ENCODE measurements at regions of chr17 and their contacts with region 1.

Region 1: GRCh38 chr17:45218895-45219661 is 2.6 kb upstream of the FMNL1 start:
- DNase-seq: peak in 34 of 35 experiments; percentile 55 to 92 (median 81)
- ATAC-seq: peak in 3 of 4 experiments; percentile 15 to 32 (median 32)
- H3K4me3 ChIP-seq: no peak overlapping the region
- H3K4me3 Mint-ChIP-seq: peak overlapping the region; percentile 84 to 88 (median 85)
- H3K27ac ChIP-seq: peak overlapping the region; percentile 18
- H3K27ac Mint-ChIP-seq: peak overlapping the region; percentile 76 to 83
- H3K4me1 ChIP-seq: peaks cover 17 to 42% of the 10 kb centered on the region in 2 experiments
- H3K4me1 Mint-ChIP-seq: peaks cover 36 to 48% (median 44%) of the 10 kb centered on the region in 3 donors
- H3K27me3 ChIP-seq: no peaks in the 10 kb centered on the region
- H3K27me3 Mint-ChIP-seq: no peaks in the 10 kb centered on the region

Region 2: GRCh38 chr17:44804302-44805089 is 414.6 kb before region 1 on chr17:
- CTCF ChIA-PET with region 1: no interaction called
- POLR2A ChIA-PET with region 1: no interaction called
- DNase-seq: no peak
- ATAC-seq: no peak
- H3K4me3 ChIP-seq: no peak overlapping the region
- H3K4me3 Mint-ChIP-seq: no peak overlapping the region
- H3K27ac ChIP-seq: no peak overlapping the region
- H3K27ac Mint-ChIP-seq: no peak overlapping the region
- H3K4me1 ChIP-seq: no peaks in the 10 kb centered on the region
- H3K4me1 Mint-ChIP-seq: no peaks in the 10 kb centered on the region
- H3K27me3 ChIP-seq: peaks cover 0 to 23% of the 10 kb centered on the region in 2 experiments
- H3K27me3 Mint-ChIP-seq: peaks cover 4 to 5% of the 10 kb centered on the region in 2 donors

Region 3: GRCh38 chr17:45108595-45109521 is 110.2 kb before region 1 on chr17:
- CTCF ChIA-PET with region 1: no interaction called
- POLR2A ChIA-PET with region 1: interaction called in 1 of 2 experiments, 10 read pairs
- DNase-seq: no peak
- ATAC-seq: peak in 1 of 4 experiments; percentile 24
- H3K4me3 ChIP-seq: no peak overlapping the region
- H3K4me3 Mint-ChIP-seq: no peak overlapping the region
- H3K27ac ChIP-seq: no peak overlapping the region
- H3K27ac Mint-ChIP-seq: no peak overlapping the region
- H3K4me1 ChIP-seq: no peaks in the 10 kb centered on the region
- H3K4me1 Mint-ChIP-seq: no peaks in the 10 kb centered on the region
- H3K27me3 ChIP-seq: peaks cover 0 to 3% of the 10 kb centered on the region in 2 experiments
- H3K27me3 Mint-ChIP-seq: no peaks in the 10 kb centered on the region

Region 4: DNA sequence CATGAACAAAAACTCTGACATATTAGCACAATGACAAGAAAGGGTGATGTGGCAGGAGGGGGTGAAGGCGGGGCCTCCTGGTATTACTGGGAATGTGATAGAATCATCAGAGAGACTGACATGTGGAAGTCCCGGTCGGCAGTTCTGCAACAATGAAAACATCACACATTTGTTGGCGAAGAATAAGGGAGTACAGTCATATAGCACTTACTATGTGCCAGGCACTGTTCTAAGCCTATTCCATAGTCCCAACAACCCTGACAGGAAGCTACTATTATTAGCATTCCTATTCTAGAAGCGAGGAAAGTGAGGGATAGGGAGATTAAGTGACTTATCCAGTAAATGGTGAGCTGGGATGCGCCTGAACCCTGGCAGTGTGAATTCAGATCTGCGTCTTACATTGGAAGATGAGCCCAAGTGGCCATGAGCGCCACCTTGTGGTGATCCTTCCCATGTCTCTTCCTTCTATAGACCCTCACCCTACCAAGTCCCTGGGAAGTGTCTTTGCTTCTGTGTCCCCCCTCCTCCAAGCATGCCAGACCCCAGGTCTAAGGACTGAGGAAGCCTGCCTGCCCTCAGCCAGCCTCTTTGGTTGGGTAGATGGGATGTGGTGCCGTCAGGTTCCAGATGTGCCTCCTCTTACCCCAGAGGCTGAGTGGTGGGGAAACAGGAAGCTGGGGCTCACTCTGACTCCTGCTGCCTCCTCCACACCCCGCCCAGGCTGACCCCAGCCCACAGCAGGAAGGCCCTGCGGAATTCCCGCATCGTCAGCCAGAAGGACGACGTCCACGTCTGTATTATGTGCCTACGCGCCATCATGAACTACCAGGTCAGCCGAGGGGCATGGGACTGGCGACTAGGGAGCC is 16.6 kb after region 1 on chr17:
- CTCF ChIA-PET with region 1: interaction called, 23 to 117 read pairs
- POLR2A ChIA-PET with region 1: no interaction called
- DNase-seq: peak in 34 of 35 experiments; percentile 54 to 93 (median 76)
- ATAC-seq: peak; percentile 28 to 66 (median 66)
- H3K4me3 ChIP-seq: no peak overlapping the region
- H3K4me3 Mint-ChIP-seq: no peak overlapping the region
- H3K27ac ChIP-seq: peak overlapping the region; percentile 46
- H3K27ac Mint-ChIP-seq: peak overlapping the region; percentile 86 to 99
- H3K4me1 ChIP-seq: peaks cover 17 to 62% of the 10 kb centered on the region in 2 experiments
- H3K4me1 Mint-ChIP-seq: peaks cover 64 to 68% (median 65%) of the 10 kb centered on the region in 3 donors
- H3K27me3 ChIP-seq: no peaks in the 10 kb centered on the region
- H3K27me3 Mint-ChIP-seq: no peaks in the 10 kb centered on the region

Region 5: GRCh38 chr17:45247429-45248131 is 28.5 kb after region 1 on chr17:
- CTCF ChIA-PET with region 1: interaction called, 4 to 14 read pairs
- POLR2A ChIA-PET with region 1: no interaction called
- DNase-seq: peak; percentile 88 to 98 (median 94)
- ATAC-seq: peak; percentile 80 to 86 (median 82)
- H3K4me3 ChIP-seq: peak overlapping the region; percentile 49 to 77
- H3K4me3 Mint-ChIP-seq: peak overlapping the region; percentile 87 to 90 (median 89)
- H3K27ac ChIP-seq: peak overlapping the region; percentile 87
- H3K27ac Mint-ChIP-seq: peak overlapping the region; percentile 92
- H3K4me1 ChIP-seq: peaks cover 23 to 84% of the 10 kb centered on the region in 2 experiments
- H3K4me1 Mint-ChIP-seq: peaks cover 56 to 72% (median 68%) of the 10 kb centered on the region in 3 donors
- H3K27me3 ChIP-seq: no peaks in the 10 kb centered on the region
- H3K27me3 Mint-ChIP-seq: no peaks in the 10 kb centered on the region

Region 6: GRCh38 chr17:45277216-45277849 is 58.3 kb after region 1 on chr17:
- CTCF ChIA-PET with region 1: interaction called in 1 of 2 experiments, 14 read pairs
- POLR2A ChIA-PET with region 1: no interaction called
- DNase-seq: peak; percentile 76 to 95 (median 88)
- ATAC-seq: peak; percentile 93 to 96 (median 94)
- H3K4me3 ChIP-seq: no peak overlapping the region
- H3K4me3 Mint-ChIP-seq: peak overlapping the region in 1 of 3 donors; percentile 25
- H3K27ac ChIP-seq: no peak overlapping the region
- H3K27ac Mint-ChIP-seq: peak overlapping the region; percentile 41
- H3K4me1 ChIP-seq: peaks cover 0 to 5% of the 10 kb centered on the region in 2 experiments
- H3K4me1 Mint-ChIP-seq: peaks cover 9 to 11% (median 9%) of the 10 kb centered on the region in 3 donors
- H3K27me3 ChIP-seq: no peaks in the 10 kb centered on the region
- H3K27me3 Mint-ChIP-seq: no peaks in the 10 kb centered on the region

Region 7: DNA sequence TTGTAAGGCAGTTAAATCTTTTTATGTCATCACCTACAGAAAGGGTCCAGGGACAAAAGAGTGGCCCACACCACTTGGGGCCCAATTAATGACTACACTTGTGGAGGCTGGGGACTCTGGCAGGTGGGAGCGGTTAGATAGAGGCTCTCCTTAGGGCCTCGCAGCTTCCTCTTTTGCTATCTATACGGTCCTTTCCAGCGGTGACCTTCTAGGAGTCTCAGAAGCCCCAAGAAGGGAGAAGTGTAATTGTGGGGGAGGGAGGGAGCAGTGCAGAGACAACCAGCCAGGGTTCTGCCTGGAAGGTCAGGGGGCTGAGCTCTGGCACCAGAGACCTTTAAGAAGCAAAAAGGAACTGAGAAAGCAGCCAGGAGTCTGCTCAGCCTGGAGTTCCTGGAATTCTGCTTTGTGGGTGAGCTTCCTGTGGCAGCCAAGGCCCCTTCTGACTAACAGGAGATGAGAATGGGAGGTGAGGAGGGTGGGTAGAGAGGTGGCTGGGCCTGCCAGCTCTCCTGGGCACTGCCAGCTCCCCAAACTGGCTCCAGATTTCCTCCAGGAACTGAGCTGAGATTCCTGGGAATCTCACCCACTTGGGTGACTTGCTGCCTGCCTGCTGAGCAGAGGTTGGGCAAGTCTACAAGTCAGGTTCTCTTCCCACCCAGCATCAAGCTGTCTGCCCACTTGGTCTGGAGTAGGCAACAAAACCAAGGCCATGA is 114.1 kb after region 1 on chr17:
- CTCF ChIA-PET with region 1: no interaction called
- POLR2A ChIA-PET with region 1: no interaction called
- DNase-seq: peak in 1 of 35 experiments; percentile 27
- ATAC-seq: peak in 1 of 4 experiments; percentile 6
- H3K4me3 ChIP-seq: no peak overlapping the region
- H3K4me3 Mint-ChIP-seq: no peak overlapping the region
- H3K27ac ChIP-seq: no peak overlapping the region
- H3K27ac Mint-ChIP-seq: no peak overlapping the region
- H3K4me1 ChIP-seq: peaks cover 0 to 8% of the 10 kb centered on the region in 2 experiments
- H3K4me1 Mint-ChIP-seq: peaks cover 3 to 23% (median 6%) of the 10 kb centered on the region in 3 donors
- H3K27me3 ChIP-seq: peaks cover 0 to 5% of the 10 kb centered on the region in 2 experiments
- H3K27me3 Mint-ChIP-seq: peaks cover 0 to 2% of the 10 kb centered on the region in 2 donors

Region 8: GRCh38 chr17:46135879-46136563 is 916.9 kb after region 1 on chr17:
- CTCF ChIA-PET with region 1: interaction called in 1 of 2 experiments, 12 read pairs
- POLR2A ChIA-PET with region 1: no interaction called
- DNase-seq: no peak
- ATAC-seq: no peak
- H3K4me3 ChIP-seq: no peak overlapping the region
- H3K4me3 Mint-ChIP-seq: peak overlapping the region in 1 of 3 donors; percentile 13
- H3K27ac ChIP-seq: no peak overlapping the region
- H3K27ac Mint-ChIP-seq: peak overlapping the region; percentile 10 to 13
- H3K4me1 ChIP-seq: peaks cover 34 to 43% of the 10 kb centered on the region in 2 experiments
- H3K4me1 Mint-ChIP-seq: peaks cover 96 to 98% (median 96%) of the 10 kb centered on the region in 3 donors
- H3K27me3 ChIP-seq: no peaks in the 10 kb centered on the region
- H3K27me3 Mint-ChIP-seq: no peaks in the 10 kb centered on the region

Measured in T-cell (primary cell).